Activated T-helper 1 cell treated with anti-CD3 and anti-CD28 coated beads, Interleukin-12 subunit alpha, Interleukin-12 subunit beta, Interleukin-2, Interleukin-4 antibody, amounts not matched to agents 30 ng/mL and 10 ng/mL and 1 ng/mL, durations not matched to agents 14 hours and 24 hours and 36 hours (primary cell): ENCODE measurements at regions of chr6 and their contacts with region 1.

Region 1: GRCh38 chr6:87701676-87702588 is at the start of gene AKIRIN2:
- DNase-seq: peak; percentile 97
- H3K4me3 Mint-ChIP-seq: peak within 1 kb of the TSS; percentile 99
- H3K27ac Mint-ChIP-seq: peak within 1 kb of the TSS; percentile 97
- H3K4me1 Mint-ChIP-seq: peaks cover 44% of the 10 kb centered on the region
- H3K27me3 Mint-ChIP-seq: no peaks in the 10 kb centered on the region
- total RNA-seq, gene AKIRIN2: 40.1 and 42.0 TPM in 2 replicates

Region 2: DNA sequence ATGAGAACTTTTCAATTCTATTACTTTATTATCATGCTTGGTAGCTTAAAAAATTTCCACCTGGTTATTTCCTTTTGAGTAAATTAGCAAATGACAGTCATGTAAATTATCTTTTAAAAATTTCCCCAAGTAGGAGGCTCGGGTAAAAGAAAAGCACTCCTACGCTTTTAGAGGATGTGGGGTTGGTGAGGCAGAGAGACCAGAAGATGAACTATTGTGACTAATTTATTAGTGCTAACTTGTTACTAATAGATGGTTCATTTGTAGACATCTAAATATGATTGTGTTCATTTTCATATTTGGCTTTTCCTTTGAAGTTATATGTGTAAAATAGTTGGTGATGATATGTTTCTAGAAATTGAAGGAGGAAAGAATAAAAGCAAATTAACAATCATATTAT is 519.6 kb before region 1 on chr6:
- intact Hi-C with region 1: loop called (anchors 1 kb)
- DNase-seq: no peak
- H3K4me3 Mint-ChIP-seq: peak overlapping the region; percentile 52
- H3K27ac Mint-ChIP-seq: peak overlapping the region; percentile 81
- H3K4me1 Mint-ChIP-seq: peaks cover 71% of the 10 kb centered on the region
- H3K27me3 Mint-ChIP-seq: no peaks in the 10 kb centered on the region

Region 3: DNA sequence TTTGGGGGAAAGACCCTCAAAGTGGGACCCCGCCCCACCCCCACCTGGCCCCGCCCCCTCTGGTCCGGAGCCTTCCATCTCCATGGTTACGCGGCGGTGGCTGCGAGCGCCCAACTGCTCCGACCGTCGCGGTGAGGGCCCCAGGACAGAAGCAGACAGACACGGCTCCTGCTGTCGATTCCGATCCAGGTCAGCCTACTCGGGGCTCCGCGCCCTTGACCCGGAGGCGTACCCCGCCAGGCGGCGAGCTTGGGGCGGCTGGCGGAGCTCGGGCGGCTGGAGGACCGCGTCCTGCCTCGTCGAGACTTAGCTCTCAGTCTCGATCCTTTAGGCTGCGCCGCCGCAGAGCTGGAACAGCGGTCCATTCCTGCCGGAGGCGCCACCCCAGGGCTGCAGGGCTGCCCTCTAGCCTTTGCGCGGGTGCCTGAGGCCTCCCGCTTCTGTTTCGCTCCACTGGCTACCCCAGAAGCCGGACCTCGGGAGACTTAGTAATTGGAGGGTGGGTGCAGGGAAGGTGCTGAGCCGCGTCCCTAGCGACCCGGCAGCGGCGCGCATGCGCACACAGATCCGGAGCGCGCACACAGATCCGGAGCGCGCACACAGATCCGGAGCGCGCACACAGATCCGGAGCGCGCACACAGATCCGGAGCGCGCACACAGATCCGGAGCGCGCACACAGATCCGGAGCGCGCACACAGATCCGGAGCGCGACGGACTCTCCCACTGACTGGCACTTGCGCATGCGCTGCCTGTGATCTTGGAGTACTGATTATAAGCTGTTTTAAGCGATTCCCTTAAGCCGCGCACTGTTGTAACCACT is 293.8 kb before region 1 on chr6 and contains the start of gene CFAP206:
- intact Hi-C with region 1: loop called (anchors 2 kb)
- DNase-seq: peak; percentile 66
- H3K4me3 Mint-ChIP-seq: peak within 1 kb of the TSS; percentile 84
- H3K27ac Mint-ChIP-seq: peak within 1 kb of the TSS; percentile 76
- H3K4me1 Mint-ChIP-seq: peaks cover 16% of the 10 kb centered on the region
- H3K27me3 Mint-ChIP-seq: peaks cover 28% of the 10 kb centered on the region
- total RNA-seq, gene CFAP206: 0.20 TPM in 1 of 2 replicates, not detected in the other

Region 4: DNA sequence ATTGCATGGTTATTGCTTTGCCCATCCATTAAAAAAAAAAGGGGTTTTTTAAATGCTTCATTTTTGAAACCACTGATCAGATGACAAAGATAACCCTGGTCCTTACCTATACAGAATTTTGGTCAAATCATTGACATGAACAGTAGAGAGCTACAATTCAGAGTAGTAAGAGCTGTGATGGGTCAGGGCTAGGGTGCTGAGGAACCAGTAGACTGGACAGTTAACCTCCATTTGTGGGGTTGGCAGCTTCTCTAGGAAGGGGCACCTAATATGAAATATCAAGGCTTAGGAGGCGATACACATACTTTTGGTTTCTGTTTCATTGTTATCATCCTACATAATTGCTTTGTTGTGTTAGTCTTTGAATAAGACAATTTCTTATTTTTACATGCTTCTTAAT is 56.9 kb before region 1 on chr6:
- intact Hi-C with region 1: loop called (anchors 1 kb)
- DNase-seq: peak; percentile 1
- H3K4me3 Mint-ChIP-seq: peak overlapping the region; percentile 59
- H3K27ac Mint-ChIP-seq: peak overlapping the region; percentile 85
- H3K4me1 Mint-ChIP-seq: peaks cover 25% of the 10 kb centered on the region
- H3K27me3 Mint-ChIP-seq: no peaks in the 10 kb centered on the region

Region 5: DNA sequence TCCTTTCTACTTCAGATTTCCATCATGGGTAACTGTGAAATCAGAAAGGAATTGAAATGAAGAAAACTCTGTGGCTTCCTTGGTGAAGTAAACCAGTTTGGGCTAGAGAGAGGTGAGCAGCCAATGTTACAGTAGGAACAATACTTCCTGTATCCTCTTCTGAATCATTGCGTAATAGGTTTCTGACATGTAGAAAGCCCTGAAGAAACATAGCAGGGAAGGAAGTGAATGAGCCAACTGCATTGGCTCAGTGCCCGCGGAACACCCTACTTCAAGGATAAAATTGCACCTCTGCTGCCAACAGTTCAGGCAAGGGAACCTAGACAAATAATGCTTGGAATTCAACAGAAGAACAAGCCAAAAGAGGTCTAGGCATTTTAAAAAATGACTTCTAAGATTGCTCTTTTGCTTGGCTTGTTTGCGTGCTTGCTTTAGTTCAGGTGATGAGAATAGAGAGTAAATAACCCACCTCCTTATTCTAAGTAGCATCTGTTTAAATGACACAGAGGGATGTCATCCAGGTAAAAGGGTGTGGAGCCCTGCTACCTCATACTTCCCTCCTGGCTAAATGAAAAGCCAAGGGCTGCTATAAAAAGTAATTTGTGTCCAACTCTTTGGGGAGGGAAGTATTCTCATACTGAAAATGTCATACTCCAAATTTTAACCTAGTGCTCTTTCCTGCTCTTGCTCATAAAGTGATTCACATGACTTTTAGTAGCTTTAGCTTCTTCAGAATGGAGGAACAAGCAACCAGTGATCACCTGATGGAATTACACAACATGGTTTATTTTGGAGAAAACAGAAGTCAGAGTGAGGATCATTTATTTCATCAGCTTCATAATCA is 30.1 kb after region 1 on chr6:
- intact Hi-C with region 1: loop called (anchors 1 kb)
- DNase-seq: no peak
- H3K4me3 Mint-ChIP-seq: no peak overlapping the region
- H3K27ac Mint-ChIP-seq: peak overlapping the region; percentile 67
- H3K4me1 Mint-ChIP-seq: peaks cover 27% of the 10 kb centered on the region
- H3K27me3 Mint-ChIP-seq: peaks cover 2% of the 10 kb centered on the region

Region 6: GRCh38 chr6:87907521-87907920 is 205.6 kb after region 1 on chr6:
- intact Hi-C with region 1: loop called (anchors 5 kb)
- DNase-seq: peak; percentile 15
- H3K4me3 Mint-ChIP-seq: peak overlapping the region; percentile 15
- H3K27ac Mint-ChIP-seq: peak overlapping the region; percentile 72
- H3K4me1 Mint-ChIP-seq: peaks cover 33% of the 10 kb centered on the region
- H3K27me3 Mint-ChIP-seq: peaks cover 37% of the 10 kb centered on the region

Region 7: GRCh38 chr6:89145787-89146646 is 1444.1 kb after region 1 on chr6 and contains the start of gene PM20D2:
- intact Hi-C with region 1: loop called (anchors 10 kb)
- DNase-seq: peak; percentile 59
- H3K4me3 Mint-ChIP-seq: peak within 1 kb of the TSS; percentile 93
- H3K27ac Mint-ChIP-seq: peak within 1 kb of the TSS; percentile 98
- H3K4me1 Mint-ChIP-seq: peaks cover 40% of the 10 kb centered on the region
- H3K27me3 Mint-ChIP-seq: peaks cover 11% of the 10 kb centered on the region
- total RNA-seq, gene PM20D2: 14.1 TPM in 2 replicates